CD4-positive, alpha-beta memory T cell (primary cell): ENCODE measurements at regions of chr19 and their contacts with region 1.

Region 1: DNA sequence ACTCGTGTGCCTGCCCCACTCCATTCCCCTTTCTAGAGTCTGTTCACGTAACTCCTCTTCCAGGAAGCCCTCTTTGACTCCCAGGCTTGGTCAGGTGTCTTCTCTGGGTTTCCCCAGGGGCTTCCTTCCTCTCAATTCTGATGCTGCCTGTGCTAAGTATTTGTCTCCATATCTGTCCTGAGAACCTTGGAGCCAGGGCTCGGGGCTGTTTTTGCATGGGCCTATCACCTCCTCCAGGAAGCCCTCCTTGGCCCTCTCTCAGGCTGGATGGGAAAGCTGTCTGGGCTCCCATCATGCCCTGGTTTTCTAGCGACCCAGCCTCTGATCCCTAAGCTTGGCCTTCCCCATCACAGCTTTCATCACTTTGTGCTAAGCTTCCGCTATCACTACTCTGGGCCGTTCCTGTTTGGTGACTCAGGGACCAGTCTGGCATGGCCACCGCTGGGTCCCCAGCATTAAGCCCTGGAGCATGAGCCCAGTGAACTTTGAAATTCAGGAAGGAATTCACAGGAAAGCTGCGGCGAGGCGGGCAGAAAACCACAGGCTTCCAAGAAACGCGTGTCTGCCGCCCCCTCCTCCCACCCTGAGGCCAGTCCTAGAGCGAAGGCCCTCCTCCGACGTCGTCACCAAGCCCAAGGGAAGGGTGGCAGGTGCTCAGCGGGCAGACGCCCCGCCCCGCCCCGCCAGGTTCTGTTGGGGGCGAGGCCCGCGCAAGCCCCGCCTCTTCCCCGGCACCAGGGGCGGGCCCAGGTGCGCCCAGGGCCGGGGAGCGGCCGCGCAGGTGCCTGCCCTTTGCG is 486 bp upstream of the SPINT2 start:
- DNase-seq: peak in 4 of 5 donors; percentile 76 to 81 (median 78)
- H3K4me3 ChIP-seq: peak overlapping the region in 1 of 2 donors; percentile 65
- H3K4me3 Mint-ChIP-seq: peak overlapping the region; percentile 82 to 89 (median 86)
- H3K27ac ChIP-seq: peak overlapping the region; percentile 44
- H3K27ac Mint-ChIP-seq: peak overlapping the region; percentile 66 to 92 (median 78)
- H3K4me1 ChIP-seq: peaks cover 21% of the 10 kb centered on the region
- H3K4me1 Mint-ChIP-seq: peaks cover 17 to 33% (median 28%) of the 10 kb centered on the region in 4 donors
- H3K27me3 ChIP-seq: no peaks in the 10 kb centered on the region
- H3K27me3 Mint-ChIP-seq: peaks cover 1 to 3% of the 10 kb centered on the region in 2 donors

Region 2: DNA sequence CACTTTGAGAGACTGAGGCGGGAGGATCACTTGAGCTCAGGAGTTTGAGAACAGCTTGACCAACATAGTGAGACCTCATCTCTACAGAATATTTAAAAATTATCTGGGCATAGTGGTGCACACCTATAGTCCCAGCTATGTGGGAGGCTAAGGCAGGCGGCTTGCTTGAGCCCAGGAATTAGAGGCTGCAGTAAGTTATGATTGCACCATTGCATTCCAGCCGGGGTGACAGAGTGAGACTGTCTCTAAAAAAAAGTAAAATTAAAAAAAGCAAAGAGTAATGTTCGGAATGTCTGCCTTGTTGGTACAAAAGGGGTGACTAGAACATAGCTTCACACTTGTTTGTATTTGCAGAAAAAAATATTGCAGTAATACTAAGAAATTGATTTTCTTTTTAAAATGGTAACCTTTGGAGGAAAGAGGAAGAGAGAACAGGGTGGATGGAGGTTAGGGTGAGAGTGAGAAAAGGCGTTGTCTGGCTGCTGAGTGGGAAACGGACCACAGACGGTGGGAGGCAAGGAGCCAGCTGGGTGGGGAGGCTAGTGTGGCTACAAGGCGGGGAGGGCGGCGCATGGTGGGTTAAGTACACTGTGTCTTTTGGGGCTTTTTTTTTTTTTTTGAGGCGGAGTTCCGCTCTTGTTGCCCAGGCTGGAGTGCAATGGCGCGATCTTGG is 17.9 kb before region 1 on chr19:
- CTCF ChIA-PET with region 1: interaction called, 17 read pairs
- POLR2A ChIA-PET with region 1: no interaction called
- intact Hi-C with region 1: no loop called
- DNase-seq: no peak
- H3K4me3 ChIP-seq: no peak overlapping the region
- H3K4me3 Mint-ChIP-seq: no peak overlapping the region
- H3K27ac ChIP-seq: no peak overlapping the region
- H3K27ac Mint-ChIP-seq: no peak overlapping the region
- H3K4me1 ChIP-seq: no peaks in the 10 kb centered on the region
- H3K4me1 Mint-ChIP-seq: peaks cover 2 to 5% (median 3%) of the 10 kb centered on the region in 4 donors
- H3K27me3 ChIP-seq: no peaks in the 10 kb centered on the region
- H3K27me3 Mint-ChIP-seq: peaks cover 0 to 4% of the 10 kb centered on the region in 2 donors

Region 3: DNA sequence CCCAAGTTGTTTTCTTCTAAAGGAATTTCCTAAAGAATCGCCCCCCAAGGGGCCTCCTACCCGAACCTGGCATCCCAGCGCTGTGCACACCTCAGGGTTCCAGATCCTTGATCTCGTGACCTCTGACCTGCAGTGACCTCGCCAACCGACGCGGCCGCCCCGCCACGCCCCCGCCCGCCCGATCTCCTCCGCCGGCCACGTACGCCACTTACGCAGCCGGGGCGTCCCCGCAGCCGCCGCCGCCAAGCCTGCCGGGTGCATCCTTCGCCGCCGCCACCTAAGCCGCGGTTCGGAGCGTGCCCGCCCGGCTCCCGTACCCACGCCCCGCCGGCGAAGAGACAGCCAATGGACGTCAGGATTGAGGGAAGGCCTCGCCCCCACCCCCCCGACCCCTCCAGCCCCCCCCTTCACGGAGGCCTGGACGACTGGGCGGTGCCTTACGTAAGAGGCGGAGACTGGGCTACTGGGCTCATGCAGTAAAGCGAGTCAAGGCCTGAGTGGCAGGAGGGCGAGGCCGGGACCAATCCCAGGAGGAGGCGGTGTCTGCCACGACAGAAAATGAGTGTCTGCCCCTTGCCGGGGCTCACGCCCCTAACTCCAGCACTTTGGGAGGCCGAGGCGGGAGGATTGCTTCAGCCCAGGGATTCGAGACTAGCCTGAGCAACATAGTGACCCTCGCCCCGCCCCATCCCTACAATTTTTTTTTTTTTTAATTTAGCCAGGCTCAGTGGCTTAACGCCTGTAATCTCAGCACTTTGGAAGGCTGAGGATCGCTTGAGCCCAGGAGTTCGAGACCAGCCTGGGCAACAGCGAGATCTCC is 52.0 kb after region 1 on chr19 and contains the start of gene YIF1B:
- CTCF ChIA-PET with region 1: interaction called, 4 read pairs
- POLR2A ChIA-PET with region 1: interaction called, 3 read pairs
- intact Hi-C with region 1: loop called (anchors 1 kb)
- DNase-seq: peak; percentile 96 to 98 (median 96)
- H3K4me3 ChIP-seq: peak within 1 kb of the TSS; percentile 83 to 97
- H3K4me3 Mint-ChIP-seq: peak within 1 kb of the TSS; percentile 80 to 98 (median 94)
- H3K27ac ChIP-seq: peak within 1 kb of the TSS; percentile 91
- H3K27ac Mint-ChIP-seq: peak within 1 kb of the TSS; percentile 89 to 99 (median 96)
- H3K4me1 ChIP-seq: peaks cover 40% of the 10 kb centered on the region
- H3K4me1 Mint-ChIP-seq: peaks cover 23 to 64% (median 44%) of the 10 kb centered on the region in 4 donors
- H3K27me3 ChIP-seq: no peaks in the 10 kb centered on the region
- H3K27me3 Mint-ChIP-seq: no peaks in the 10 kb centered on the region
- total RNA-seq, gene YIF1B: 35.8 to 38.4 TPM